B cell (primary cell): ENCODE measurements at regions of chr2 and their contacts with region 1.

Region 1: GRCh38 chr2:136117909-136118818 is at the start of gene CXCR4:
- DNase-seq: peak; percentile 94
- ATAC-seq: peak; percentile 55
- H3K4me3 ChIP-seq: peak within 1 kb of the TSS; percentile 93 to 100 (median 98)
- H3K4me3 Mint-ChIP-seq: peak within 1 kb of the TSS; percentile 98
- H3K27ac ChIP-seq: peak within 1 kb of the TSS; percentile 96 to 99
- H3K27ac Mint-ChIP-seq: peak within 1 kb of the TSS; percentile 100
- H3K4me1 ChIP-seq: peaks cover 48 to 52% of the 10 kb centered on the region in 2 donors
- H3K4me1 Mint-ChIP-seq: peaks cover 59% of the 10 kb centered on the region
- H3K27me3 ChIP-seq: no peaks in the 10 kb centered on the region
- H3K27me3 Mint-ChIP-seq: no peaks in the 10 kb centered on the region
- CTCF ChIP-seq: no peak
- total RNA-seq, gene CXCR4: 2,047 and 2,119 TPM in 2 replicates

Region 2: GRCh38 chr2:135694711-135695110 is 423.5 kb before region 1 on chr2:
- CTCF ChIA-PET with region 1: no interaction called
- POLR2A ChIA-PET with region 1: no interaction called
- intact Hi-C with region 1: no loop called
- DNase-seq: no peak
- ATAC-seq: no peak
- H3K4me3 ChIP-seq: no peak overlapping the region
- H3K4me3 Mint-ChIP-seq: no peak overlapping the region
- H3K27ac ChIP-seq: no peak overlapping the region
- H3K27ac Mint-ChIP-seq: no peak overlapping the region
- H3K4me1 ChIP-seq: no peaks in the 10 kb centered on the region
- H3K4me1 Mint-ChIP-seq: no peaks in the 10 kb centered on the region
- H3K27me3 ChIP-seq: no peaks in the 10 kb centered on the region
- H3K27me3 Mint-ChIP-seq: no peaks in the 10 kb centered on the region
- CTCF ChIP-seq: no peak

Region 3: DNA sequence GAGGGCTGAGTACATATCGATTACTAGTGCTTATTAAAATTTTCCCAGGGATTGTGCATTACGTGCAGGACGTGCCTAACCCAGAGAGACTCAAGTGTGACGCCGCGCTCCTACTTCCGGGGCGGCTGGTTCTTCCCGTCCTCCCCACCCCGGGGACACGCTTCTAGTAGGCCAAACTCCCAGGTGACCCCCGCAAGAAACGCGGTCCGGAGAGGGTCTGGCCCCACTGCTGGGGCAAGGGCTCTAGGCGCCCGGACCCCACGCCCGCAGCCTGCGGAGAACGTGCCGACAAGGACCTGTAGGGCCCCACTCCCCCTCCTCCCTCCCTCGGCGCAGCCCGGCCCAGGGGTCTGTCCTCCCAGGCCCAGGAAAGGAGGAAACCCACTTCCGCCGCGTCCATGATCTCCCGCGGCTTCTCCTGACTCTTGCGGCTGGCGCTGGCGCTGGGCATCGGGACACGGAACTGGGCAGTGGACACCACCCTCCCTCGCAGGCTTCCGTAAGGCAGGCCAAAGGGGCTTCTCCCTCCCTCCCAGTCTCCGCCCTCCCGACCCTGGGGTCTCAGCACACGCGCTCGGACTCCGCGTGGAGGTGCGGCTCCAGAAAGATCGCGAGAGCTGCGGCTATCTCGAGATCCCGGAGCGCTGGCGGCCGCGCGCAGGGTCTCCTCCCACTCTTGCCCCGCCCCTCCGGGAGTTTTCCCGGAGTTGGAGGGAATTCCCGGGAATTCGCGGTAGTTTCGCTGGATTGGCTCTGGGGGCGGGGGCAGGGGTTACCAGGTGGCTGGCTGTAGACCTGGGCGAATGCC is 132.9 kb before region 1 on chr2 and contains the start of gene DARS1:
- CTCF ChIA-PET with region 1: no interaction called
- POLR2A ChIA-PET with region 1: interaction called, 7 read pairs
- intact Hi-C with region 1: loop called (anchors 1 kb)
- DNase-seq: peak; percentile 91
- ATAC-seq: peak; percentile 84
- H3K4me3 ChIP-seq: peak within 1 kb of the TSS; percentile 75 to 99 (median 93)
- H3K4me3 Mint-ChIP-seq: peak within 1 kb of the TSS; percentile 97
- H3K27ac ChIP-seq: peak within 1 kb of the TSS; percentile 94 to 97
- H3K27ac Mint-ChIP-seq: peak within 1 kb of the TSS; percentile 98
- H3K4me1 ChIP-seq: peaks cover 29 to 31% of the 10 kb centered on the region in 2 donors
- H3K4me1 Mint-ChIP-seq: peaks cover 50% of the 10 kb centered on the region
- H3K27me3 ChIP-seq: no peaks in the 10 kb centered on the region
- H3K27me3 Mint-ChIP-seq: no peaks in the 10 kb centered on the region
- CTCF ChIP-seq: no peak
- total RNA-seq, gene DARS1: 88.3 and 92.0 TPM in 2 replicates

Region 4: GRCh38 chr2:136129601-136130000 is 11.4 kb after region 1 on chr2:
- CTCF ChIA-PET with region 1: interaction called, 37 read pairs
- POLR2A ChIA-PET with region 1: interaction called, 405 read pairs
- intact Hi-C with region 1: loop called (anchors 1 kb)
- DNase-seq: peak; percentile 73
- ATAC-seq: peak; percentile 2
- H3K4me3 ChIP-seq: peak overlapping the region in 2 of 5 experiments; percentile 4 to 11
- H3K4me3 Mint-ChIP-seq: peak overlapping the region; percentile 83
- H3K27ac ChIP-seq: peak overlapping the region; percentile 98 to 99
- H3K27ac Mint-ChIP-seq: peak overlapping the region; percentile 96
- H3K4me1 ChIP-seq: peaks cover 96 to 98% of the 10 kb centered on the region in 2 donors
- H3K4me1 Mint-ChIP-seq: peaks cover 94% of the 10 kb centered on the region
- H3K27me3 ChIP-seq: no peaks in the 10 kb centered on the region
- H3K27me3 Mint-ChIP-seq: no peaks in the 10 kb centered on the region
- CTCF ChIP-seq: no peak

Region 5: GRCh38 chr2:136195226-136195625 is 77.1 kb after region 1 on chr2:
- CTCF ChIA-PET with region 1: no interaction called
- POLR2A ChIA-PET with region 1: no interaction called
- intact Hi-C with region 1: no loop called
- DNase-seq: no peak
- ATAC-seq: no peak
- H3K4me3 ChIP-seq: no peak overlapping the region
- H3K4me3 Mint-ChIP-seq: no peak overlapping the region
- H3K27ac ChIP-seq: no peak overlapping the region
- H3K27ac Mint-ChIP-seq: no peak overlapping the region
- H3K4me1 ChIP-seq: peaks cover 8% of the 10 kb centered on the region in 2 donors
- H3K4me1 Mint-ChIP-seq: peaks cover 27% of the 10 kb centered on the region
- H3K27me3 ChIP-seq: no peaks in the 10 kb centered on the region
- H3K27me3 Mint-ChIP-seq: no peaks in the 10 kb centered on the region
- CTCF ChIP-seq: no peak

Region 6: DNA sequence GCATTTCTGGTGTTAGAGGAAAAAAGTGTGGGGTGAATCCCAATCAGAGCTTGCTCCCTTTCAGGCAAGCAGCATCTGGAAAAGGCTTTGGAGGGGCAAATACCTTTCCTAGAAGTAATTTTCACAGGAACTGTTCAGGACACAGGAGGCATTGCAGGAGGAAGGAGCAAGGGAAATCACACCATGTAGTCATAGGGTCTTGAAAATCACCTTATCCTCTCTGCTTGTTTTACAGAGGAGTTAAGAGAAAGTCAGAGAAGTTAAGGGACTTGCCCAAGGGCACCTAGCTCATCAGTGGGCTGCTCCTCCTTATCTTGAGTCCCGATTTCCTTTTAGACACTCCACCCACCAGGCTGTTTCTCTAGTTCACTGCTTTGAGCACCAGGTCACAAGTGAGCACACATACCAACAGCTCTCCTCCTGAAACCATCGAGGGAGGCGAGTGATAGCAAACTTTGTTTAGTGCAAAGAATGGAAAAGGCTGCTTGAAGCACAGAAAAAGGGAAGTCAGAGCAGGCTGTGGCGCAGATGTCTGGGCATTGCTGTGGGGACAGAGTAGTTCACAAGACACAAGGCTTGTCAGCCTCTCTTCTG is 89.0 kb after region 1 on chr2:
- CTCF ChIA-PET with region 1: interaction called, 22 read pairs
- POLR2A ChIA-PET with region 1: interaction called, 112 read pairs
- intact Hi-C with region 1: loop called (anchors 1 kb)
- DNase-seq: peak; percentile 94
- ATAC-seq: peak; percentile 65
- H3K4me3 ChIP-seq: peak overlapping the region in 4 of 5 experiments; percentile 1 to 44 (median 26)
- H3K4me3 Mint-ChIP-seq: peak overlapping the region; percentile 84
- H3K27ac ChIP-seq: peak overlapping the region; percentile 98 to 99
- H3K27ac Mint-ChIP-seq: peak overlapping the region; percentile 99
- H3K4me1 ChIP-seq: peaks cover 70 to 74% of the 10 kb centered on the region in 2 donors
- H3K4me1 Mint-ChIP-seq: peaks cover 77% of the 10 kb centered on the region
- H3K27me3 ChIP-seq: no peaks in the 10 kb centered on the region
- H3K27me3 Mint-ChIP-seq: no peaks in the 10 kb centered on the region
- CTCF ChIP-seq: no peak

Region 7: GRCh38 chr2:136225950-136226835 is 108.0 kb after region 1 on chr2:
- CTCF ChIA-PET with region 1: interaction called, 3 read pairs
- POLR2A ChIA-PET with region 1: interaction called, 17 read pairs
- intact Hi-C with region 1: no loop called
- DNase-seq: peak; percentile 88
- ATAC-seq: peak; percentile 84
- H3K4me3 ChIP-seq: no peak overlapping the region
- H3K4me3 Mint-ChIP-seq: peak overlapping the region; percentile 42
- H3K27ac ChIP-seq: peak overlapping the region; percentile 62 to 75
- H3K27ac Mint-ChIP-seq: peak overlapping the region; percentile 95
- H3K4me1 ChIP-seq: peaks cover 46 to 54% of the 10 kb centered on the region in 2 donors
- H3K4me1 Mint-ChIP-seq: peaks cover 75% of the 10 kb centered on the region
- H3K27me3 ChIP-seq: no peaks in the 10 kb centered on the region
- H3K27me3 Mint-ChIP-seq: no peaks in the 10 kb centered on the region
- CTCF ChIP-seq: no peak

Region 8: DNA sequence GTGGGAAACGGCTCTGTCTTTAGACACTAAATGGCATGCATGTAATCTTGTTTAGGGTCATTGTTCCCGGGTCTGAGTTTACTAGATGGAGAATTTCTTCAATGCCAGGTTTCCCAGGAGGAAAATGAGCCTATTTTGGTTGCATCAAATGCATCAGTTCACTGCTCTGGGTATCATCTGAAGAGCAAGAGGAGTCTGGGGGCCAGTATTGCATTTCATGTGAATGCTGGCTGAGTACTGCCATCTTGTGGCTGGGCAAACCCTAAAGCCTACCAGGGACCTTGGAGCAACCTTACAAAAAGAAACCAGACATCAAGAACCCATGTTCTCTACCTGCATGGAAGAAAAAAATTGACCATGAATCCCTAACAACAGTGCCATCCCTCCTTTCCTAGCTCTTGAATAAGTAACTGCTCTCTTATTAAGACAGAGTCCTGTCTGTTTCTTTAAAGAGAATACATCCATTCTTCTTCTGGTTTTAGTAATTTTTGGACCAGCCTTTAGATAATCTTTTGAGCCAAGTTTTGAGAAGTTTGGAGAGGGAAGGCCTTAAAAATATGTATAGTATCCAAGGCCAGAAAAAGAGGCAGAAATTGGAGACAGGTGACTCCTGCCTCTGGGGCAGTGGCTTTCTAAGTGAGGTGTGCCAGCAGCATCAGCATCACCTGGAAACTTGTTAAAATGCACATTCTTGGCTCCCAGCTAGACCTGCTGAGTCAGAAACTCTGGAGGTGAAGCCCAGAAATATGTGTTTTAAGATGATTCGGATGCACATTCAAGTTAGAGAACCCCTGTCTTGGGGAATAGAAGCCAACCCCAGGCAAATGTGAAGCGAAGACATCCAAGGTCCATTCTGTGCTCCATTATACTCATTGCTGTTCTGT is 260.8 kb after region 1 on chr2:
- CTCF ChIA-PET with region 1: interaction called, 20 read pairs
- POLR2A ChIA-PET with region 1: interaction called, 47 read pairs
- intact Hi-C with region 1: loop called (anchors 1 kb)
- DNase-seq: peak; percentile 90
- ATAC-seq: peak; percentile 29
- H3K4me3 ChIP-seq: peak overlapping the region in 1 of 5 experiments; percentile 8
- H3K4me3 Mint-ChIP-seq: peak overlapping the region; percentile 49
- H3K27ac ChIP-seq: peak overlapping the region in 1 of 2 donors; percentile 71
- H3K27ac Mint-ChIP-seq: peak overlapping the region; percentile 97
- H3K4me1 ChIP-seq: peaks cover 61 to 65% of the 10 kb centered on the region in 2 donors
- H3K4me1 Mint-ChIP-seq: peaks cover 81% of the 10 kb centered on the region
- H3K27me3 ChIP-seq: no peaks in the 10 kb centered on the region
- H3K27me3 Mint-ChIP-seq: no peaks in the 10 kb centered on the region
- CTCF ChIP-seq: peak; percentile 88